Astrocyte of the cerebellum (primary cell): ENCODE measurements at regions of chr11 and their contacts with region 1.

Region 1: GRCh38 chr11:69192301-69192721 is 36.6 kb downstream of the SMIM38 start:
- DNase-seq: no peak
- H3K4me3 ChIP-seq: no peak overlapping the region
- CTCF ChIP-seq: no peak

Region 2: GRCh38 chr11:69157156-69157821 is 35.0 kb before region 1 on chr11:
- in situ Hi-C with region 1: no loop called
- DNase-seq: no peak
- H3K4me3 ChIP-seq: no peak overlapping the region
- CTCF ChIP-seq: no peak

Region 3: GRCh38 chr11:69229511-69229910 is 37.2 kb after region 1 on chr11:
- in situ Hi-C with region 1: loop called (anchors 5 kb)
- DNase-seq: no peak
- H3K4me3 ChIP-seq: no peak overlapping the region
- CTCF ChIP-seq: no peak

Region 4: DNA sequence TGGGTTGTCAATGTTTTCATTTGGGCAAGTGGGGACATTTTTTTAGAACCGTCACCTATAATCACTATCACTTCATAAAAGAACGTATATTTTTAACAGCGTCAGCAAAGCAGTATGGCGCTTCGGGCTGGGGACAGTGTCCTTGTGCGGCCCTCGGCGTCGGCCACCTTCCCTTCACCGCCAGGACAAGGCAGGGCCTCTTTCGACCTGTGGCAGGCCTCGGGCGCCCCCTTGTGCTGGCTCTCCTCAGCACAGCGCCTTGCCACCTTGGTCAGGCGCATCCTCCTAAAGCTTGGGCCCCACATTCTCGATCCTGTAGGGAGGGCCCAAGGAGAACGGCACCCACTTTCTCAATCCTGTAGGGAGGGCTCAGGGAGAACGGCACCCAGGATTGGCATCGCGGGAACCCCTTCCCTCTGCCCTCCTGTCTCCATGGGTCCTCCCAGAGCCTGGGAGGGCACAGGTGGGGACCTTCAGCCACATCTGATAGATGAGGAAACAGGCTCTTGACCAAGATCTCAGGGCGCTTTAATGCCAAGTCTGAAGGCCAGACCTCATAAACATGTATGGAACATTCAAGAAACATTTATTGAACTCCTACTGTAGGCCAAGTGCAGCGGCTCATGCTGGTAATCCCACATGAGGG is 999.3 kb after region 1 on chr11:
- in situ Hi-C with region 1: no loop called
- DNase-seq: peak; percentile 23
- H3K4me3 ChIP-seq: no peak overlapping the region
- CTCF ChIP-seq: peak; percentile 91